ENCODE measurements at regions of chr11 and their contacts with region 1.

Region 1: DNA sequence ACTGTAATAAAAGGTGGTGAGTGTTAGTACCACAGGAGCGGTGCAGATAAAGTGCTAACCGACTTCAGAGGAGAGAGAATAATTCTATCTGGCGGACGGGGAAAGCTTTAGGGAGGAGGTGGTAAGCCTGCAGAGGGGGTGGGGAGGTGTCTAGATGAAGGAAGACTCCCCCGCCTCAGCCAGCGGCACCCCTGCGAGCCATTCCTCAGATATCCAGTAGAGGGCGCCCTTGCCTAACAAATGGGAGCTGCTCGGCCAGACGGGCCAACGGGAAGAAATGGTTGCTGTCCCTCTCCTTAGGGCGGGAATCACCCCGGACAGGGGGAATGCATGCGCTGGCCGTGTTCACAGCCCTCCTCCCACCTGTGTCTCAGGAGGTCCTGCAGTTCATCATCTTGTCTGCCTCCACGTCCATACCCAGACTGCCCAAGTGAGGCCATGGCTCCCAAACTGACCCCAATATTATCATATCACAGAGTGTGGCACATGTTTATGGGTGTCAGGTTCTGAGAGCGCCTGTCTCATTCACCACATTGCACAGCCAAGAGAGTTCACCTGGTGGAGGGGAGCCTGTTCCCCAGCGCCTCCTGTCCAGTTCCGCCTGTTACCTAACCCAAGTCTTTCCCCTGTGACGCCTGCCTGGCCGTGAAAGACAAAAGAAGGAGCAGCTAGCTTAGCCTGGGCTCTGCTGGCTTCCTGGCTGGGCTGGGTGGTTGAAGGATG is 85.5 kb downstream of the ST3GAL4 start:
- DNase-seq: peak; percentile 70 to 74
- H3K4me3 ChIP-seq: no peak overlapping the region
- H3K27ac ChIP-seq: no peak overlapping the region
- H3K4me1 ChIP-seq: peaks cover 0 to 11% of the 10 kb centered on the region in 2 donors
- H3K27me3 ChIP-seq: no peaks in the 10 kb centered on the region
- CTCF ChIP-seq: peak; percentile 83 to 96 (median 92)
- POLR2A ChIP-seq: no peak

Region 2: DNA sequence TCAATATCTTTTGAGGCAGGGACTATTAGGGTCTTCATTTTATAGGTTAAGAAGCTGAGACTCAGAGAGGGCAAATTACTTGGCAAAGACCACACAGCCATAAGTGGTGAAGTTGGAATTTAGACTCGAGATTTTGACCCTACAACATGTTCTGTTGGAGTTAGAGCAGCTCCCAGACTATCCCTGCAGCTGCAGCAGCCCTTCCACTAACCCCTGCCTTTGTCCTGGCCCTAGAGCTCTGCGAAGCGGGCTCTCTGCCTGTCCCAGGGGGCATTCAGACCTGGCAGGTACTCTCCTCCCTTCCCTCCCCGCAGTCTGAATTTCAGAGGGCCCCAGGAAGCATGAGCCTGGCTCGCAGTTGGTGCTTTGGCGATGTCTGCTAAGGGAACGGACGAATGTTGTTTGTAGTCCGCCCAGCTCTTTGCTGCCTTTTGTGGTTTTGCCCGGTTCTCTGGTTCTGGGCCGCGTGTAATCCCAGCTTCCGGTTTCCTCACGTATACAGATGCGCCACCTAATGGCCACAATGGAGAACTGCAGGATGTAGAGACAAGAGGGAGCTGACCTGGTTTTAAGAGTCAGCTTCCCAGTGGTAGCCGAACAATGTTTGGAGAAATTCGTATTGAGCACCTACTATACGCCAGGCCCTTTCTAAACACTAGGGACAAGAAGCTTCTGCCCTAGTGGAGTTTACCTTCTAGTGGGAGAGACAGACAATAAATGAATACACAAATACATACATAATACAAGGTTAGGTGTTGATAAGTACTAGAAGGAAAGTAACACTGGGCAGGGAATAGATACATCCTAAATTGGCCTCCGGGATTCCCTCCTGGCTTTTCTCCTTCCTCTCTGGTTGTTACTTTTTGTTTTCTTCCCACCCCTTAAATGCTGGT is 39.7 kb after region 1 on chr11:
- intact Hi-C with region 1: loop called (anchors 5 kb)
- DNase-seq: peak; percentile 77 to 79
- H3K4me3 ChIP-seq: no peak overlapping the region
- H3K27ac ChIP-seq: peak overlapping the region in 1 of 3 donors; percentile 5
- H3K4me1 ChIP-seq: peaks cover 0 to 10% of the 10 kb centered on the region in 2 donors
- H3K27me3 ChIP-seq: no peaks in the 10 kb centered on the region
- CTCF ChIP-seq: peak; percentile 84 to 96 (median 89)
- POLR2A ChIP-seq: no peak

Region 3: DNA sequence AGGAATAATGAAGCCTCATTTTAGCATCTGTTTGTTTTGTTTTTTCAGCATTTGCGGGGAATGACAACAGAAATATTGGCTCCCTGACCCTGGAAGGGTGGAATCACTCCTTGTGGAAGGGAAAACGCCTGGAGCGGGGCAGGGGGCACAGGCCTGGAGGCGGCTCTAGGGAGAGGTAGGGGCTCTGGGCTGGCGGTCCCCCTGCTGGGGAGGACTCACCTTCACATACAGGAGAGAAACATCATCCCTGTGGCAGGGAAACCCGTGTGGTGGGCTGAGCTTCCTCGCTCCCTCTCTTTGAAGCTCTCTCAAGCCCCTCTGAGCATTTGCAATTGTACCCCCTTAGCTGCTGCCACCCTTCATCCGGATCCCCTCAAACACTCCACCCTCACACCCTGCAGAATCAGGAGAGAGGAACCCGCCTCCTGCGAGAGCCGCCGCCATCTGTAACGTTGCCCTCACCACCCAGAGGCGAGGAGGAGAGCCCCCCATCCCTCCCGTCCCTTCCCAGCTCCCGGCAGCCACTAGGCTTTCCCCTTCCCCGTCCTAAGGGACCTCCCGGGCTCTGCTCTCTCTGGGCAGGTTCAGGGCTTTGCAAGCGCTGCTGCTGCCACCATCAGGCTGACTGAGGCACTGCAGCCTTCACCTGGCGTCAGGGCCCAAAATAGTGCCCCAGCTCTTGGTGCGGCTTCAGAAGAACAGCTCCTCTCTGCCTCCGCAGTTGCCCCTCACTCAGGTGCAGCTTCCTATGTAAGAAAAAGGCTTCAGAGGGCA is 549.2 kb after region 1 on chr11:
- intact Hi-C with region 1: loop called (anchors 5 kb)
- DNase-seq: peak; percentile 63 to 64
- H3K4me3 ChIP-seq: no peak overlapping the region
- H3K27ac ChIP-seq: no peak overlapping the region
- H3K4me1 ChIP-seq: no peaks in the 10 kb centered on the region
- H3K27me3 ChIP-seq: no peaks in the 10 kb centered on the region
- CTCF ChIP-seq: peak; percentile 65 to 95 (median 88)
- POLR2A ChIP-seq: no peak

Region 4: GRCh38 chr11:127340438-127340837 is 899.5 kb after region 1 on chr11:
- intact Hi-C with region 1: loop called (anchors 5 kb)
- DNase-seq: no peak
- H3K4me3 ChIP-seq: no peak overlapping the region
- H3K27ac ChIP-seq: no peak overlapping the region
- H3K4me1 ChIP-seq: no peaks in the 10 kb centered on the region
- H3K27me3 ChIP-seq: no peaks in the 10 kb centered on the region
- CTCF ChIP-seq: no peak
- POLR2A ChIP-seq: no peak

Measured in thyroid gland (tissue), 4 donors.